CD4-positive, alpha-beta memory T cell (primary cell): ENCODE measurements at regions of chr1 and their contacts with region 1.

Region 1: DNA sequence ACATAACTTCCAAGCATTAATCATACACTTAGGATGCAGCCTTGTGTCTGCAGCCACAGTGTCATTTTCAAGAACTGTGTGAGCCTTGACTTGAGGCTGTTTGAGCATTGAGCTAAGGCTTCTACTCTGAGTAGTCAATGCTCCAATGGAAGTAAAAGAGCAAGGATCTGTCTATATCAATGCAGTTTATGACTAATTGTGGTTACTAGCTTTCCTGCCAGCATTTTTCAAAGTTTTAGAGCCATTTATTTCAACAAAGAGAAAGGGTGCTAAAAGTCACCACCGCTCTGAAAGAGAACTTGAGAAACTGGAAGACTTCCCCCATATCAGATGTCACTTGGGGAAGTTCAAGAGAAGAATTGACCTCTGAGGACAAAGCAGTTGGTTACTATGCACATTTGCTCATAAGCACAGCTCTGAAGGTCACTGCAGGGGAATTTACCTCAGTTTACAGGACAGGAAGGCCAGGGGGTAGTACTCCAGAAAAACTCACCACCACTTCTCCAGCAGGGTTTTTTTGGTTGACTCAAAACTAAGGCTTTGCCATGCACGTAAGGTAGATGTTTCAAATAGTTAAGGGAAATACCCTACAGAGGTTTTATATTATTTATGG is 24.5 kb upstream of the RGS1 start:
- DNase-seq: no peak
- H3K4me3 ChIP-seq: no peak overlapping the region
- H3K4me3 Mint-ChIP-seq: peak overlapping the region in 6 of 8 donors; percentile 26 to 58 (median 45)
- H3K27ac ChIP-seq: no peak overlapping the region
- H3K27ac Mint-ChIP-seq: peak overlapping the region; percentile 54 to 89 (median 75)
- H3K4me1 ChIP-seq: peaks cover 57% of the 10 kb centered on the region
- H3K4me1 Mint-ChIP-seq: peaks cover 34 to 61% (median 49%) of the 10 kb centered on the region in 4 donors
- H3K27me3 ChIP-seq: no peaks in the 10 kb centered on the region
- H3K27me3 Mint-ChIP-seq: no peaks in the 10 kb centered on the region

Region 2: DNA sequence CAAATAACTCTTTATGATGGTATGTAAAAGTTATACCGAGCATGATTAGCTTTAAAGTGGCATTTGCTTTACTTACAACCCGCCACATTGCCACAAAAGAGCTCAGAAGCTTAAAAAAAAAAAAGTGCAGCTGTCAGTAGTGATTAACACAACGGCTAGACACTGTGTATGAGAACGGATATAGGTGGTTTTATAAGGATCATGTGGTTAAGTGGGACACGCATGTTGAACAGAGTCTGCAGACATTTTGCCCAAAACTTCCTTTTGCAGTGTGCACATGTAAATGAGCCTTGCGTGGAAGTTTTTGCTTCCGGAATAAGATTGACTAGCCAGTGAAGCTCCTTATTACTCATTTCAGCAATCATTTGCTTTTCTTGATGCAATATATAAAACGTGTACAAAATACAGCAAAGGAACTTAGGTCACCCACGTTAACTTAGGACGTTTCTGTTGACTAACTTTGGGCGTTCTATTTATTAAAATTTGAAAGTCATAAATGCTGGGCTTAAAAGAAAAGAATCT is 34.2 kb before region 1 on chr1:
- CTCF ChIA-PET with region 1: interaction called, 3 read pairs
- POLR2A ChIA-PET with region 1: interaction called, 14 read pairs
- intact Hi-C with region 1: loop called (anchors 5 kb)
- DNase-seq: peak; percentile 83 to 90 (median 86)
- H3K4me3 ChIP-seq: no peak overlapping the region
- H3K4me3 Mint-ChIP-seq: peak overlapping the region; percentile 56 to 83 (median 76)
- H3K27ac ChIP-seq: peak overlapping the region; percentile 35
- H3K27ac Mint-ChIP-seq: peak overlapping the region; percentile 81 to 98 (median 94)
- H3K4me1 ChIP-seq: peaks cover 28% of the 10 kb centered on the region
- H3K4me1 Mint-ChIP-seq: peaks cover 28 to 47% (median 38%) of the 10 kb centered on the region in 4 donors
- H3K27me3 ChIP-seq: no peaks in the 10 kb centered on the region
- H3K27me3 Mint-ChIP-seq: no peaks in the 10 kb centered on the region

Region 3: GRCh38 chr1:192539297-192540092 is 11.5 kb before region 1 on chr1:
- CTCF ChIA-PET with region 1: interaction called, 6 read pairs
- POLR2A ChIA-PET with region 1: interaction called, 20 read pairs
- intact Hi-C with region 1: loop called (anchors 1 kb)
- DNase-seq: no peak
- H3K4me3 ChIP-seq: no peak overlapping the region
- H3K4me3 Mint-ChIP-seq: peak overlapping the region; percentile 13 to 83 (median 54)
- H3K27ac ChIP-seq: peak overlapping the region; percentile 15
- H3K27ac Mint-ChIP-seq: peak overlapping the region; percentile 73 to 97 (median 94)
- H3K4me1 ChIP-seq: peaks cover 46% of the 10 kb centered on the region
- H3K4me1 Mint-ChIP-seq: peaks cover 28 to 52% (median 41%) of the 10 kb centered on the region in 4 donors
- H3K27me3 ChIP-seq: no peaks in the 10 kb centered on the region
- H3K27me3 Mint-ChIP-seq: no peaks in the 10 kb centered on the region

Region 4: DNA sequence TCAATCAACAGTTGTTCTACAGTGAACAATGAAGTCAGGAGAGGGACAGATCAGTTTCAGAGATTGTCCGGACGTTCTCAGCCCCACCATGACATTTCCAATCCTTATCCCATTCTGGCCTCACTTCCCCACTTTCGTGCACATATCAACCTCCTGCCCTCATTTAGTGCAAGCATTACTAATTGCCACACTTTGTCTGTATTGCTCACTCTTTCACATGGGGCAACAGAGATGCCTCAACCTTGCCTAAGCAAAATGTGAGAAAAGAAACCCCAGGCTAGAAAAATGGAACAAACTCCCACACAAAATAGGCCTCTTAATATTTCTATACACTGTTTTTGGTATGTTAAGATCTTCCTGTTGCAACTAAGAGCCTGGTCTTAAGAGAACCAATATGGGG is 15.6 kb after region 1 on chr1:
- CTCF ChIA-PET with region 1: interaction called, 4 read pairs
- POLR2A ChIA-PET with region 1: interaction called, 15 read pairs
- intact Hi-C with region 1: loop called (anchors 2 kb)
- DNase-seq: no peak
- H3K4me3 ChIP-seq: no peak overlapping the region
- H3K4me3 Mint-ChIP-seq: no peak overlapping the region
- H3K27ac ChIP-seq: no peak overlapping the region
- H3K27ac Mint-ChIP-seq: peak overlapping the region in 1 of 7 donors; percentile 75
- H3K4me1 ChIP-seq: peaks cover 30% of the 10 kb centered on the region
- H3K4me1 Mint-ChIP-seq: peaks cover 23 to 33% (median 27%) of the 10 kb centered on the region in 4 donors
- H3K27me3 ChIP-seq: no peaks in the 10 kb centered on the region
- H3K27me3 Mint-ChIP-seq: no peaks in the 10 kb centered on the region

Region 5: GRCh38 chr1:192573499-192573898 is 22.5 kb after region 1 on chr1:
- CTCF ChIA-PET with region 1: interaction called, 4 read pairs
- POLR2A ChIA-PET with region 1: interaction called, 15 read pairs
- intact Hi-C with region 1: no loop called
- DNase-seq: no peak
- H3K4me3 ChIP-seq: no peak overlapping the region
- H3K4me3 Mint-ChIP-seq: peak overlapping the region in 4 of 8 donors; percentile 5 to 44 (median 28)
- H3K27ac ChIP-seq: no peak overlapping the region
- H3K27ac Mint-ChIP-seq: peak overlapping the region; percentile 67 to 95 (median 82)
- H3K4me1 ChIP-seq: peaks cover 77% of the 10 kb centered on the region
- H3K4me1 Mint-ChIP-seq: peaks cover 52 to 73% (median 61%) of the 10 kb centered on the region in 4 donors
- H3K27me3 ChIP-seq: no peaks in the 10 kb centered on the region
- H3K27me3 Mint-ChIP-seq: peaks cover 0 to 3% of the 10 kb centered on the region in 2 donors

Region 6: DNA sequence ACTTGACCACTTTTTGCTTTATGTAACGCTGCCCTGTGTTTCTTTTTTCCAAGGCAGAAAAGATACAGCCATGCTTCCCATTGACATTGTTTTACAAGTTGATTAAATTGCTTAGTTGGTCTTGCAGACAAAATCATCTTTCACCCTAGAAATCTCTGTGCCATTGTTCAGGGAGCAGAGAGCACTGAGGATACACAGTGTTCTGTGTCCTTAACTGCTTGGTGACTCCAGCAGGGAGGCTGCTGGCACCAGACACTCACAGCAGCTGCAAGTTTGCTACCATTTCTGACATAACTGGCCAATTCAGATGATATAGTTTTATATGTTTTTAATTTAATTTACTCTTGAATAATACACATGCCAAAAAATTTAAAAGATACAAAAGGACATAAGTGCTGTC is 376.5 kb after region 1 on chr1:
- CTCF ChIA-PET with region 1: no interaction called
- POLR2A ChIA-PET with region 1: no interaction called
- intact Hi-C with region 1: no loop called
- DNase-seq: no peak
- H3K4me3 ChIP-seq: no peak overlapping the region
- H3K4me3 Mint-ChIP-seq: no peak overlapping the region
- H3K27ac ChIP-seq: no peak overlapping the region
- H3K27ac Mint-ChIP-seq: no peak overlapping the region
- H3K4me1 ChIP-seq: no peaks in the 10 kb centered on the region
- H3K4me1 Mint-ChIP-seq: no peaks in the 10 kb centered on the region
- H3K27me3 ChIP-seq: no peaks in the 10 kb centered on the region
- H3K27me3 Mint-ChIP-seq: peaks cover 0 to 2% of the 10 kb centered on the region in 2 donors